Body of pancreas (tissue), 4 donors: ENCODE measurements at regions of chr18 and their contacts with region 1.

Region 1: GRCh38 chr18:52339891-52340371 is at the start of gene DCC:
- DNase-seq: peak; percentile 54 to 69 (median 62)
- ATAC-seq: peak; percentile 79
- H3K4me3 ChIP-seq: no peak within 1 kb of the TSS
- H3K27ac ChIP-seq: no peak within 1 kb of the TSS
- H3K4me1 ChIP-seq: peaks cover 14% of the 10 kb centered on the region
- H3K27me3 ChIP-seq: peaks cover 0 to 8% of the 10 kb centered on the region in 2 donors
- CTCF ChIP-seq: peak in 6 of 7 experiments; percentile 22 to 61 (median 57)
- POLR2A ChIP-seq: no peak
- total RNA-seq, gene DCC: 0.33 TPM in 1 of 2 donors, not detected in the other

Region 2: GRCh38 chr18:52903857-52904256 is 563.9 kb after region 1 on chr18:
- intact Hi-C with region 1: loop called (anchors 10 kb)
- DNase-seq: peak; percentile 55 to 74 (median 68)
- ATAC-seq: peak; percentile 65
- H3K4me3 ChIP-seq: no peak overlapping the region
- H3K27ac ChIP-seq: no peak overlapping the region
- H3K4me1 ChIP-seq: no peaks in the 10 kb centered on the region
- H3K27me3 ChIP-seq: no peaks in the 10 kb centered on the region
- CTCF ChIP-seq: peak; percentile 39 to 81 (median 60)
- POLR2A ChIP-seq: no peak